Activated T-helper 2 cell treated with anti-CD3 and anti-CD28 coated beads, Interferon-gamma antibody, Interleukin-2, Interleukin-4, amounts not matched to agents 10 μg/mL and 5 μg/mL and 100 μg/mL, durations not matched to agents 14 hours and 24 hours and 36 hours (primary cell): ENCODE measurements at regions of chr12 and their contacts with region 1.

Region 1: DNA sequence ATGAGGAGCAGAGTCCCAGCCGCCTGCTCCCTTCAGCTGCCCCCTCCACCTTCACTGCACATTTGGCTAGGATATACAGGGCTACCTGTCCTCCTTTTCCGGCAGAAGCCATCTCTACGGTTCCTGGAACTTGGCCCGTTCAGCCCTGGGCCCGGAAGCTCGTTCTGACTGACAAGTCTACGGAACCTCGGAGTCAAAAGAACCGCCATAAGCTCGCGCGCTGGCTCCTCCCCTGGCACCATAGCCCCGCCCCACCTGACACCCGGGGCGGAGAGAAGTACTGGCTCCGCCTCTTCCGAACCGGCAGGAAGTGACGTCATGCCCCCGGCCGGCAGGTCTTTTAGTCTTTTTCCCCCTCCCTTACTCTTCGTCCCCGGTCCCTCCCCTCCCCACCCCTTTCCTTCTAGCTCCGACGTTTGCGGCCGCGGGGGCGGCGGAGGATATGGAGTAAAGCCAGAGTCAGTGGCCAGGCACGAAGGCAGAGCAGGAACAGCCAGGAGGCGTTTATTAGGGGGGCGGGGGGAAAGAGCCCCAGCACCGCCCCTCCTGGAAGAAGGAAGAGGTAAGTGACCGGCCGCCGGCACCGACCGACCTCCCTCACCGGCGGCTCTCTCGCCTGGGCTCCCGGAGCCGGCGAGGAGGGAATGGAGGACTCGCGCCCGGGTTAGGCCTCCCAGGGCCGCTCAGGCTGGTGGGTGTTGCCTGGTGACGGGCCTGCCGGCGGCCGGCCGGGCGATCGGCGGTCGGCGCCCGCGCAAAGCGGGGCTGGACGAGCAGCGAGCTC is at the starts of genes DEPDC4 and SCYL2:
- DNase-seq: peak; percentile 89
- H3K4me3 Mint-ChIP-seq: peak within 1 kb of the TSS; percentile 95
- H3K27ac Mint-ChIP-seq: peak within 1 kb of the TSS; percentile 98
- H3K4me1 Mint-ChIP-seq: peaks cover 27% of the 10 kb centered on the region
- H3K27me3 Mint-ChIP-seq: no peaks in the 10 kb centered on the region
- total RNA-seq, gene DEPDC4: 1.7 and 1.8 TPM in 2 replicates
- total RNA-seq, gene SCYL2: 31.8 and 34.5 TPM in 2 replicates

Region 2: GRCh38 chr12:100142851-100143559 is 124.0 kb before region 1 on chr12 and contains the start of gene BLTP3B:
- intact Hi-C with region 1: loop called (anchors 1 kb)
- DNase-seq: peak; percentile 82
- H3K4me3 Mint-ChIP-seq: peak within 1 kb of the TSS; percentile 94
- H3K27ac Mint-ChIP-seq: peak within 1 kb of the TSS; percentile 98
- H3K4me1 Mint-ChIP-seq: peaks cover 36% of the 10 kb centered on the region
- H3K27me3 Mint-ChIP-seq: no peaks in the 10 kb centered on the region
- total RNA-seq, gene BLTP3B: 69.0 and 73.2 TPM in 2 replicates

Region 3: GRCh38 chr12:100311317-100311716 is 44.3 kb after region 1 on chr12:
- intact Hi-C with region 1: loop called (anchors 5 kb)
- DNase-seq: no peak
- H3K4me3 Mint-ChIP-seq: no peak overlapping the region
- H3K27ac Mint-ChIP-seq: no peak overlapping the region
- H3K4me1 Mint-ChIP-seq: peaks cover 3% of the 10 kb centered on the region
- H3K27me3 Mint-ChIP-seq: no peaks in the 10 kb centered on the region

Region 4: GRCh38 chr12:100573292-100574186 is 306.5 kb after region 1 on chr12 and contains the start of gene GAS2L3:
- intact Hi-C with region 1: loop called (anchors 2 kb)
- DNase-seq: peak; percentile 69
- H3K4me3 Mint-ChIP-seq: peak within 1 kb of the TSS; percentile 89
- H3K27ac Mint-ChIP-seq: peak within 1 kb of the TSS; percentile 63
- H3K4me1 Mint-ChIP-seq: peaks cover 15% of the 10 kb centered on the region
- H3K27me3 Mint-ChIP-seq: peaks cover 22% of the 10 kb centered on the region
- total RNA-seq, gene GAS2L3: 3.4 and 4.7 TPM in 2 replicates

Region 5: DNA sequence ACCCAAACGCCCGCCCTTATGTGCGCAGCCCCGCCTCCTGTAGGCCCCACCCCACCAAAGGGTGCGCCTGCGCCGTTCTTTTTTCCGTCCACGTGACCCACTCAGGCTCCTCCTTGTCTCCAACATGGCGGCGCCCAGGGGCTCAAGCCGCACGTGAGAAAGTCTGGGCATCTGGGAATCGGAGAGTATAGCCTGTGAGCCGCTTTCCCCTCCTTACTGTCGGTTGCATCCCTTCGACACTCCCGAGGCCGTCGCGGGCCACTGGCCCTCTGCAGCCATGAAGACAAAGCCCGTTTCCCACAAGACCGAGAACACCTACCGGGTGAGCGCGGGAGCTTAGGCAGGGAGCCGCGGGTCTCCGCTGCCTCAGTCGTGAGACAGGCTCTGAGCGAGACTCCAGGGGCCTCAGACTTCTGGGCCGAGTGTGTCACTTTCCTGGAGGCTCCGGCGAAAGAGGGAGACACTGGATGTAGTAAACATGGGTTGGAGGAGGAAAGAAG is 1013.0 kb after region 1 on chr12 and contains the start of gene UTP20:
- intact Hi-C with region 1: loop called (anchors 5 kb)
- DNase-seq: peak; percentile 87
- H3K4me3 Mint-ChIP-seq: peak within 1 kb of the TSS; percentile 91
- H3K27ac Mint-ChIP-seq: peak within 1 kb of the TSS; percentile 84
- H3K4me1 Mint-ChIP-seq: peaks cover 13% of the 10 kb centered on the region
- H3K27me3 Mint-ChIP-seq: peaks cover 21% of the 10 kb centered on the region
- total RNA-seq, gene UTP20: 34.6 and 35.6 TPM in 2 replicates